SK-N-SH (cell line): ENCODE measurements at regions of chr1 and their contacts with region 1.

Region 1: DNA sequence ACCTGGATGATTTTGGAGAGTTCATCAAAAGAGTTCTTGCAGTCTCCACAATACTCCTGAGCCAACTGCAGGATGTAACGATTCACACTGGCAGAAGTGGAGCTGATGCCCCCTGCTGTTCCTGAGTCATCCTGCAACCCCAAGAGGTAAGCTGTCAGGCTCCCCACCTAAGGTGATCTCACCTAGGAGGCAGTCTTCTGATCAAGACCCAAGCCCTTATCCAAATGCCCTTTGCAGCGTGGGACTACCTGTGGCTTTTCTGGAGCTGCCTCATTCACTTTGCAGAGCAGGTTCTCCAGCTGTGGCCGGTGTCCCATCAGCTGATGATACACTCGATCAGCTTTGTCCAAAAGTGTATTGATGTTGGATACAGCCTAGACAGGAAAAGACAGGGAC is 96.4 kb downstream of the UBR4 start:
- DNase-seq: peak; percentile 48
- H3K4me3 ChIP-seq: no peak overlapping the region
- H3K27ac ChIP-seq: no peak overlapping the region
- H3K4me1 ChIP-seq: no peaks in the 10 kb centered on the region
- H3K27me3 ChIP-seq: no peaks in the 10 kb centered on the region
- CTCF ChIP-seq: peak; percentile 67
- EP300 ChIP-seq: no peak
- RAD21 ChIP-seq: peak; percentile 62

Region 2: DNA sequence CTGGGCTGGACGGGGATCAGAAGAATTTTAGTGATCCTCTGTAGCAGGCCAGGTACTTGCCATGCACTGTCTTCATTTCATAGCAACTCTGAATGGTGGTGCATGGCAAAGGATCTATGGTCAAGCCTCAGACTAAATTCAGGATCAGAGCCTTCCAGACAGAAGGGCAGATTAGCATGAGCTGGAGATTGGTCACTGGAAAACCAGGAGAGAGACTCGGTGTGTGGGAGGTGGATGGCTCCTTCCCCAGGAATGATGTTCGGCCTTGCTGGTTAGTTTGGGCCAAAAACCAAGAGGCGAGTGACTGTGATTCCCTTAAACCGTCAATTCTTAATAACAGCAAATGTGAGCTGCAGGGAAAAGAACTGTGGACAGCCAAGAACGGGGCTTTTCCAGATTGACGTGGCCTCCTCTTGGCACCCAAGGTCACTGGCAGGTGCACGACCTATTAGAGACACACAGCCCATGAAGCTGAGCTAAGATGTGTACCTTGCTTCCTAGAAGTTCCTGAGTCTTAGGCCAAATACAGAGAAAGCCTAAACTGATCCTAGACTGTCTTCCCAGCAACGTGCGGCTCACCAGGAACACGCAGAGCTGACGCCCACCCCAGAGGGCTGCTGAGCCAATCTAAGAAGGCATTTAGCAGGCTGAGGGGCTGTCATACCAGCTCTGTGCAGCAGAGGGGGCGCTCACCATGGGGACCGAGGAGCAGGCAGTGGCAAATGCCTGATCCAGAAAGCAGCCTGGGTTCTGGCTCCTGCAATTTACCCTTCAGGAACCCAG is 229.9 kb before region 1 on chr1:
- CTCF ChIA-PET with region 1: interaction called, 12 read pairs
- POLR2A ChIA-PET with region 1: no interaction called
- DNase-seq: peak; percentile 86
- H3K4me3 ChIP-seq: no peak overlapping the region; a peak in 1 of 4 replicates
- H3K27ac ChIP-seq: no peak overlapping the region
- H3K4me1 ChIP-seq: peaks cover 4 to 8% of the 10 kb centered on the region in 2 experiments; a peak in 2 of 4 replicates
- H3K27me3 ChIP-seq: no peaks in the 10 kb centered on the region
- CTCF ChIP-seq: peak; percentile 84
- EP300 ChIP-seq: no peak
- RAD21 ChIP-seq: peak; percentile 82

Region 3: DNA sequence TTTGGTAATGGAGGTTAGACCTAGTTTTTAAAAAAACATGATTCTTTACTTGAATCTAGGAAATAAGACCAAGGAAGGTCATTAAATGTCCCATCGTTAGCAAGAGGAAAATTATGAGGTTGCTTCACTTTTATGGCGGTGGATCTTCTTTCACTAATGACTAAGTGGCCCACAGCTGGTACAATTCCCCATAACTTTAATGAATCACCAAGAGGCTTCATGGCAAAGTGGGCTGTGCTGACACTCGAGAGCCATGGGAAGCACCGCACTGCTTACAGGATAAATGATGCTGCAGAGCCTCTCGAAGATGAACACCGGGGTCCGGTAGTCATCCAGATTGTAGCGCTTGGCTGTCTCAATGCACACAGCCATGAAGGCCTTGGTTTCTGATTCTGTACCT is 12.5 kb before region 1 on chr1:
- CTCF ChIA-PET with region 1: interaction called, 13 read pairs
- POLR2A ChIA-PET with region 1: no interaction called
- DNase-seq: no peak
- H3K4me3 ChIP-seq: no peak overlapping the region
- H3K27ac ChIP-seq: no peak overlapping the region
- H3K4me1 ChIP-seq: no peaks in the 10 kb centered on the region
- H3K27me3 ChIP-seq: no peaks in the 10 kb centered on the region
- CTCF ChIP-seq: no peak
- EP300 ChIP-seq: no peak
- RAD21 ChIP-seq: no peak

Region 4: DNA sequence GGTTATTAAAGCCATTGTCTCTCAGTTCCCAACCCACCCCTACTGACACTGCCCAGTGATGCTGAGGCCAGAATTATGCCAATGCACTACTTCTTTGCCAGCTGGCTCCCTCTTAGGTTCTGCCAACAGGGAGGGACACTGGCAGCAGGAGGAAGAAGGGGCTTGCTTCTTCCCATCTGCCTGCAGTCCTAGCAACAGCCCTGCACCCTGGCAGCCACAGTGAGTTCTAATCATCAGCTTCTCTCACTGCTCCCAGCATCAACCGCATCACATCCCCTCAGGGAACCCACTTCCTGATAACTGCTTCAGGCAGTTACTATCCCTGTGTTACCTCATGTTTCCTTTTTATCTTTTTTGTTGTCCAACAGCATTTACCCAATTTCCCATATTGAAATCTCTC is 10.1 kb after region 1 on chr1:
- CTCF ChIA-PET with region 1: interaction called, 19 read pairs
- POLR2A ChIA-PET with region 1: no interaction called
- DNase-seq: no peak
- H3K4me3 ChIP-seq: no peak overlapping the region
- H3K27ac ChIP-seq: no peak overlapping the region
- H3K4me1 ChIP-seq: no peaks in the 10 kb centered on the region
- H3K27me3 ChIP-seq: no peaks in the 10 kb centered on the region
- CTCF ChIP-seq: no peak
- EP300 ChIP-seq: no peak
- RAD21 ChIP-seq: no peak

Region 5: DNA sequence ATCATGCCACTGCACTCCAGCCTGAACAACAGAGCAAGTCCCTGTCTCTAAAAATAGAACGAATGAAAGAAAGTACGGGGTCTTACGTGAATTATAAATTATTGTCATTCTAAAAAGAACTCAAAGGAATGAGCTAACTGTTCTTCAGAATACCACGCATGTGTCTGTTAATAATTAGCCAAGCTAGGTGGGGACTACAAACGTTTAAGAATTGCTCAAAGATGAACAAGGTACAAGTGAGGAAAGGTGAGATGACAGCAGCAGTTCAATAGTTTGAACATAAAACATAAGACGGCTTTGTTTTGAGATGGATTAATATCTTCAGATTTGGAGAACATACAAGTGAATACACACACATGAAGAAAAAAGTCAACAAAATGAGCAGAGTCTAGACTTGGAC is 16.8 kb after region 1 on chr1:
- CTCF ChIA-PET with region 1: interaction called, 12 read pairs
- POLR2A ChIA-PET with region 1: no interaction called
- DNase-seq: no peak
- H3K4me3 ChIP-seq: no peak overlapping the region
- H3K27ac ChIP-seq: no peak overlapping the region
- H3K4me1 ChIP-seq: no peaks in the 10 kb centered on the region
- H3K27me3 ChIP-seq: no peaks in the 10 kb centered on the region
- CTCF ChIP-seq: no peak
- EP300 ChIP-seq: no peak
- RAD21 ChIP-seq: no peak

Region 6: DNA sequence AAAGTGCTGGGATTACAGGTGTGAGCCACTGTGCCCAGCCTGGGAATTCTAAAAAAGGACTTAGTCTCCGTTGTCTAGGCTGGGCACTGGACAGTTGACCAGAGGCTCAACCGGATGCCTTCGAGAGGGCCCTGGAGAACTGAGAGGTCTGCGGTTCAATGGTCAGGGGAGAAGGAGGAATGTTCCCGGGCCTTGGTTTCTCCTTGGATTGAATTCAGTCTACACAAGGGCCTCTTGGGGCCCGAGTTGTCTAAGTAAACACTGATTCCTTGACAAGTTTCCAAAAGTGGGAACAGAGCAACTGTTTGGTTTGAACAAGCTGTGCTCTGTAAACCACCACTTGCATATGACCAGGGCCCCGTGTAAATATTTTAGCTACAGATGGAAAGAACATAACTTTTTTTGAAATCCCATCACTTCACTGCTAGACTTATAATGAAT is 400.7 kb after region 1 on chr1:
- CTCF ChIA-PET with region 1: no interaction called
- POLR2A ChIA-PET with region 1: no interaction called
- DNase-seq: no peak
- H3K4me3 ChIP-seq: no peak overlapping the region
- H3K27ac ChIP-seq: no peak overlapping the region
- H3K4me1 ChIP-seq: no peaks in the 10 kb centered on the region
- H3K27me3 ChIP-seq: no peaks in the 10 kb centered on the region
- CTCF ChIP-seq: no peak
- EP300 ChIP-seq: no peak
- RAD21 ChIP-seq: no peak